Activated naive CD4-positive, alpha-beta T cell treated with anti-CD3 and anti-CD28 coated beads for 36 hours (primary cell): ENCODE measurements at regions of chr2 and their contacts with region 1.

Region 1: GRCh38 chr2:39124000-39124745 is 3.3 kb upstream of the SOS1 start:
- DNase-seq: peak; percentile 96
- H3K4me3 Mint-ChIP-seq: peak overlapping the region; percentile 88
- H3K27ac Mint-ChIP-seq: peak overlapping the region; percentile 97
- H3K4me1 Mint-ChIP-seq: peaks cover 39% of the 10 kb centered on the region
- H3K27me3 Mint-ChIP-seq: no peaks in the 10 kb centered on the region

Region 2: DNA sequence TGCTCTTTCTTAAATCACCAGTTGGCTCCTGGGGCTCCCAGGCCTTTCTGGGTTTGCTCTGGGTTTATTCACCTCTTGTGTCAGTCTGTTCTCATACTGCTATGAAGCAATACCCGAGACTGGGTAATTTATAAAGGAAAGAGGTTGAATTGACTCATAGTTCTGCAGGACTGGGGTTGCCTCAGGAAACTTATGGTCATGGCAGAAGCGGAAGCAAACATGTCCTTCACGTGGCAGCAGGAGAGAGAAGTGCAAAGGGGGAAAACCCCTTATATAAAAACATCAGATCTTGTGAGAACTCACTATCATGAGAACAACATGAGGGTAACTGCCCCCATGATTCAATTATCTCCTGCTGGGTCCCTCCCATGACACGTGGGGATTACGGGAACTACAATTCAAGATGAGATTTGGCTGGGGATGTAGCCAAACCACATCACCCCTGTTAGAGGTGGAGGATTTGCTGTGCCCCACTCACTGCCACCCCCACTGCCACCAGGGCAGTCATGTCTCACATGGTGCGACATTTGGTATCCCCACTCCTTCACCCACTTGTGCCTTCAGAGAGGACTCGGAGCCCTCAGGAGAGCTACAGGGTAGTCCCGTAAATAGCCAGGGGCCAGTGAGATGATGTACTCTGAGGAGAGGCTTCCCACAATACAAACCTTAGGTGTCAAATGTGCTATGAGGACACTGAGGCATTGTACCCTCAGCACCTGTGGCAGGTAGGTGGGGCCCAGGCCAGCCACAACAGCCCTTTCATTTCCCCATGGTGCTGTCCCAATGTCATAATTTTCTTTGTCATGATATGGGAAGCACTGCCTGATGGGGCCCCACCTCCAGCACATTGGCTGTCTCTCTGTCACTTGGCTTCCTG is 1488.4 kb before region 1 on chr2:
- CTCF ChIA-PET with region 1: no interaction called
- intact Hi-C with region 1: loop called (anchors 1 kb)
- DNase-seq: peak; percentile 85
- H3K4me3 Mint-ChIP-seq: no peak overlapping the region
- H3K27ac Mint-ChIP-seq: peak overlapping the region; percentile 90
- H3K4me1 Mint-ChIP-seq: peaks cover 49% of the 10 kb centered on the region
- H3K27me3 Mint-ChIP-seq: no peaks in the 10 kb centered on the region

Region 3: DNA sequence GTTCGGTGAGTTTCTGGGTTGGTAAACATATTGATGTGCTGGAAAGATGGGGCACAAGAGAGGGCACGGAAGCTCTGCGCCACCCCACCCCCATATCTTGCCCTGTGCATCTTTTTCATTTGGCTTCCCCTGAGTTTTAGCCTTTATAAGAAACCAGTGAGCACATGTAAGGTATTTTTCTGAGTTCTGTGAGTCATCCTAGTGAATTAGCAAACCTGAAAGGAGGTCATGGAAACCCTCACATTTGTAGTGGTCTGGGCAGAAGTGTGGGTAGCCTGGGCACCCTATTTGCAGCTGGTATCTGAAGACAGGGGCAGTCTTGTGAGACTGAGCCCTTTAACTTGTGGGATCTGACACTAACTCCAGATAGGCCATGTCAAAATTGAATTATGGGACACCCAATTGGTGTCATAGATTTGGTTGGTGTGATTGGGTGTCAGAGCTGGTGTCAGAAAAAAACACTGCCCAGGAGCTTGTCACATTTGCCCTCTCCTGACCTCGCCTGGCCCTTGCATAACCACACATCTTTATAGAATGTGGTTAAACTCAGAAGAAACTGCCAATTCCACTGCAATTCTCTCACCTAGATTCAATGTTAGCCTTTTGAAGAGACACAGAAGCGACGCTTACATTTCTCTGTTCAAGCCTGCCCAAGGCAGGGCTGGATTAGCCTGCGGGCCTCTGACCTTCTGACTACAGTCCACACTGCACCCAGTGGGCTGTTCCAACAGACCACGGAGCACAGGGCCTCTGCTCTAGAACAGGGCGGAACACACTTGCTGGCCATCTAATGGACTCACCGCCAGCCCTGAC is 470.3 kb before region 1 on chr2:
- CTCF ChIA-PET with region 1: no interaction called
- intact Hi-C with region 1: loop called (anchors 1 kb)
- DNase-seq: peak; percentile 83
- H3K4me3 Mint-ChIP-seq: peak overlapping the region; percentile 43
- H3K27ac Mint-ChIP-seq: peak overlapping the region; percentile 90
- H3K4me1 Mint-ChIP-seq: peaks cover 37% of the 10 kb centered on the region
- H3K27me3 Mint-ChIP-seq: no peaks in the 10 kb centered on the region

Region 4: GRCh38 chr2:38875576-38876367 is 248.4 kb before region 1 on chr2 and contains the starts of genes DHX57 and MORN2:
- CTCF ChIA-PET with region 1: no interaction called
- intact Hi-C with region 1: loop called (anchors 5 kb)
- DNase-seq: peak; percentile 88
- H3K4me3 Mint-ChIP-seq: peak within 1 kb of the TSS; percentile 85
- H3K27ac Mint-ChIP-seq: peak within 1 kb of the TSS; percentile 77
- H3K4me1 Mint-ChIP-seq: peaks cover 24% of the 10 kb centered on the region
- H3K27me3 Mint-ChIP-seq: no peaks in the 10 kb centered on the region
- total RNA-seq, gene DHX57: 10.8 to 12.5 TPM
- total RNA-seq, gene MORN2: 5.1 to 6.2 TPM

Region 5: GRCh38 chr2:39099870-39100728 is 24.1 kb before region 1 on chr2:
- CTCF ChIA-PET with region 1: interaction called, 8 read pairs
- intact Hi-C with region 1: loop called (anchors 1 kb)
- DNase-seq: peak; percentile 38
- H3K4me3 Mint-ChIP-seq: no peak overlapping the region
- H3K27ac Mint-ChIP-seq: peak overlapping the region; percentile 75
- H3K4me1 Mint-ChIP-seq: peaks cover 47% of the 10 kb centered on the region
- H3K27me3 Mint-ChIP-seq: no peaks in the 10 kb centered on the region

Region 6: GRCh38 chr2:39379643-39380524 is 255.7 kb after region 1 on chr2:
- CTCF ChIA-PET with region 1: no interaction called
- intact Hi-C with region 1: loop called (anchors 5 kb)
- DNase-seq: no peak
- H3K4me3 Mint-ChIP-seq: no peak overlapping the region
- H3K27ac Mint-ChIP-seq: no peak overlapping the region
- H3K4me1 Mint-ChIP-seq: peaks cover 19% of the 10 kb centered on the region
- H3K27me3 Mint-ChIP-seq: no peaks in the 10 kb centered on the region

Region 7: GRCh38 chr2:39948016-39948719 is 824.0 kb after region 1 on chr2:
- CTCF ChIA-PET with region 1: no interaction called
- intact Hi-C with region 1: loop called (anchors 5 kb)
- DNase-seq: no peak
- H3K4me3 Mint-ChIP-seq: no peak overlapping the region
- H3K27ac Mint-ChIP-seq: peak overlapping the region; percentile 91
- H3K4me1 Mint-ChIP-seq: peaks cover 28% of the 10 kb centered on the region
- H3K27me3 Mint-ChIP-seq: no peaks in the 10 kb centered on the region